AG04449 (cell line): ENCODE measurements at regions of chr6 and their contacts with region 1.

Region 1: DNA sequence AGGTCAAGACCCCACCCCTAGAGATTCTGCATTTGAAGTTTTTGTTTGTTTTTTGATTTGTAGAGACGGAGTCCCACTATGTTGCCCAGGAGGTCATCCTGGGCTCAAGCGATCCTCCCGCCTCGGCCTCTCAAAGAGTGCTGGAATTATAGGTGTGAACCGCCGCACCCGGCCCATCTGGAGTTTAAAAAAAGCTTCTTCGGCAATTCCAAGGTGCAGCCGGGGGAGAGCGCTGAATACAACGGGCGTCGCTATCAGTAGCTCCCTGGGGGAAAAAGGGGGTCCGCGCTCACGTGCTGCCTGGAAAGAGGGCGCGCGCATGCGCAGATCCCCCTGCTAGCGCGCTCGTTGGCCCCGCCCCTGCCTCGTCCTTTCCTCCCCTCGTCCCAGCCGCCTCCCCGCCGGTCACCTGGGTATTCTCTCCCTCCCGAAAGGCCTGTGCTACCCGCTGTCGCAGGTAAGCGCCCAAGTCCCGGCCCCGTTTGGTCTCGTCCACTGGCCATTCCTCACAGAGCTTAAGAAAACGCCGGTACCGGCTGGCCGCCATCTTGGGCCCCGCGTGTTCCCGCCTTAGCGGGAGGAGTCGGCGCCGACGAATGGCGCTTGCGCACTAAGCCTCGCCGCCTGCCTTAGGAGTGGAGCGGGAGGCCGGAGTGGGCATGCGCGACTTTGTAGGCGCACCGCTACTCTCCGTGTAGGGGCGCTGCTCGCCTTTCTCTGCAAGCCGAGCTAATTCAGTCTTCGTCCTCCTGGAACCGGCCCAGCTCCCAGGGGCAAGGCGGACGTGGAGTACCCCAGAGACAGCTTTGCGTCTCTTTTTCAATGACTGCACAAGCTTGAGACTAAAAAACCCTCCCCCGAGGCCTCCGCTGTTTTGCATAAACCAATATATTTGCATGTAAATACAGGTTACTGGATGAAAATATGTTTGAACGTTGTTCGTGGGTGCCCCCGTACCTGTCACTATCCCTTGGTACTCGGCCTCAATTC is at the start of gene UQCC2:
- DNase-seq: peak; percentile 60
- H3K4me3 ChIP-seq: peak within 1 kb of the TSS; percentile 98
- CTCF ChIP-seq: peak; percentile 86

Region 2: GRCh38 chr6:33694401-33694931 is 17.0 kb before region 1 on chr6:
- CTCF ChIA-PET with region 1: interaction called, 12 read pairs
- POLR2A ChIA-PET with region 1: interaction called, 9 read pairs
- DNase-seq: peak; percentile 17
- H3K4me3 ChIP-seq: no peak overlapping the region
- CTCF ChIP-seq: no peak

Region 3: DNA sequence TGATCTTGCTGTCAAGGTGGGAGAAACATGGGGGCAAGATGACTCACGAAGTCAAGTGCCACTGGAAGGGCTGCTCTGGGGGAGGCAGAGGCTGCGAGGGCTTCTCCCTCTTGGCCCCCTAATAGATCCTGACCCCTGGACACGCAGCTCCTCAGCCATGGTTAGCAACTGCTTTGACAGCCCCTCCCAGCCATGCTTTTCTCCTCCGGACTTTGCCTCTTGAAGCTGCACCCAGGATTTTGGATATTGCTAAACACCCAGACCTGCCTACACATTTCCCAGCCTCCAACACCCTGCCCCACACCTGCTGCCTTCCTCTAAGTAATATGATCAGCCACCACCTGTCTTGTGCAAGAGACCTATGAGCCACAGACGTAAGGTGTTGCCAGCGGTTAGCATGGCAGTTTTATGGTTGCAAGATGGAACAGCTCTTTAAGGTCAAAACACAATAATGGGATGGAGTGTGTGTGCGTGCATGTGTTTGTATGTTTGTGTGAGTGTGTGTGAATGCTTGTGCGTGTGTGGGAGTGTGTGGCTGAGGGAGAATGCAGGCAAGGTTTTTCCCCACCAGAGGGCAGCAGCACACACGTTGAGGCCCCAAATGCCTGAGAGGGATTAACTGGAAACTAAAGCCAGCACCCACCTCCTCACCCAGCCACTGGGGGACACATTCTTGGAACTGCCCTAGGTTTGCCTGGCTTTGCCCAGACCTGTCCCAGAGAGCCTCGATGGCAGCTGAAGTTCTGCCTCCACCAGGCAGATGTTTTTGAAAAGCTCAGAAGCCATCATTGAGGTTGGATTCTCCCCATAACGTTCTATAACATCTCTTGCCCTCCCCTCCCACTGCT is 32.8 kb after region 1 on chr6:
- CTCF ChIA-PET with region 1: interaction called, 31 read pairs
- POLR2A ChIA-PET with region 1: interaction called, 3 read pairs
- DNase-seq: no peak
- H3K4me3 ChIP-seq: no peak overlapping the region
- CTCF ChIP-seq: peak; percentile 90

Region 4: GRCh38 chr6:33761922-33762629 is 50.6 kb after region 1 on chr6:
- CTCF ChIA-PET with region 1: interaction called, 44 read pairs
- POLR2A ChIA-PET with region 1: no interaction called
- DNase-seq: no peak
- H3K4me3 ChIP-seq: no peak overlapping the region
- CTCF ChIP-seq: peak; percentile 70

Region 5: GRCh38 chr6:34027445-34027936 is 316.1 kb after region 1 on chr6:
- CTCF ChIA-PET with region 1: interaction called, 26 read pairs
- POLR2A ChIA-PET with region 1: interaction called, 3 read pairs
- DNase-seq: no peak
- H3K4me3 ChIP-seq: no peak overlapping the region
- CTCF ChIP-seq: peak; percentile 90

Region 6: GRCh38 chr6:34154668-34155447 is 443.4 kb after region 1 on chr6:
- CTCF ChIA-PET with region 1: interaction called, 41 read pairs
- POLR2A ChIA-PET with region 1: no interaction called
- DNase-seq: no peak
- H3K4me3 ChIP-seq: peak overlapping the region; percentile 42
- CTCF ChIP-seq: peak; percentile 94